ENCODE measurements at regions of chr7 and their contacts with region 1.

Region 1: GRCh38 chr7:124257638-124258308 is 224.9 kb upstream of the TMEM229A start:
- DNase-seq: no peak
- ATAC-seq: no peak
- H3K4me3 ChIP-seq: no peak overlapping the region
- H3K27ac ChIP-seq: no peak overlapping the region
- H3K4me1 ChIP-seq: no peaks in the 10 kb centered on the region
- H3K27me3 ChIP-seq: no peaks in the 10 kb centered on the region
- CTCF ChIP-seq: no peak
- EP300 ChIP-seq: no peak
- POLR2A ChIP-seq: no peak
- RAD21 ChIP-seq: no peak

Region 2: GRCh38 chr7:123823898-123824753 is 433.6 kb before region 1 on chr7:
- CTCF ChIA-PET with region 1: no interaction called
- POLR2A ChIA-PET with region 1: no interaction called
- in situ Hi-C with region 1: no loop called
- intact Hi-C with region 1: no loop called
- DNase-seq: no peak
- ATAC-seq: no peak
- H3K4me3 ChIP-seq: no peak overlapping the region
- H3K27ac ChIP-seq: no peak overlapping the region
- H3K4me1 ChIP-seq: peaks cover 6% of the 10 kb centered on the region; the same call in 1 of the 2 replicates
- H3K27me3 ChIP-seq: no peaks in the 10 kb centered on the region
- CTCF ChIP-seq: no peak
- EP300 ChIP-seq: no peak
- POLR2A ChIP-seq: no peak
- RAD21 ChIP-seq: no peak

Region 3: DNA sequence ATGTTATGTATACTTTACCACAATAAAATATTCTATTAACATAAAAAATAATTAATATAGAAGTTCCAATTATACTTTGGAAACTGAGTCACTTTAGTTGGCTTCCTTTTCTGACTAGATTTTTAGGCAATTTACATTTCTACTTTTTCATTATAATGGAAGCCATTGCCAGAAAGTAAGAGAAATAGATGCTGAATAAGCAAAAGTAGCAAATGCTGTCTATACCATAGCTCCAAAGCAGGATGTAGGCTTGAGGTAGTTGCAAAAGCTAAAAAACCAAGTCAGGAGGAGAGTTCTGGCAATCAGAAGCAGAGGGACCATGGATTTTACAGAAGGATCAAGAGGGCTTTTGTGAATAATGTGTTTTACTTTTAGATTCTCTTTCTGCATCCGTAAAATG is 37.5 kb after region 1 on chr7:
- CTCF ChIA-PET with region 1: no interaction called
- POLR2A ChIA-PET with region 1: no interaction called
- in situ Hi-C with region 1: no loop called
- intact Hi-C with region 1: loop called (anchors 1 kb)
- DNase-seq: no peak
- ATAC-seq: no peak
- H3K4me3 ChIP-seq: no peak overlapping the region
- H3K27ac ChIP-seq: no peak overlapping the region
- H3K4me1 ChIP-seq: no peaks in the 10 kb centered on the region
- H3K27me3 ChIP-seq: no peaks in the 10 kb centered on the region
- CTCF ChIP-seq: no peak
- EP300 ChIP-seq: no peak
- POLR2A ChIP-seq: no peak
- RAD21 ChIP-seq: no peak

Measured in HepG2 (cell line).